ENCODE measurements at regions of chr12 and their contacts with region 1.

Region 1: DNA sequence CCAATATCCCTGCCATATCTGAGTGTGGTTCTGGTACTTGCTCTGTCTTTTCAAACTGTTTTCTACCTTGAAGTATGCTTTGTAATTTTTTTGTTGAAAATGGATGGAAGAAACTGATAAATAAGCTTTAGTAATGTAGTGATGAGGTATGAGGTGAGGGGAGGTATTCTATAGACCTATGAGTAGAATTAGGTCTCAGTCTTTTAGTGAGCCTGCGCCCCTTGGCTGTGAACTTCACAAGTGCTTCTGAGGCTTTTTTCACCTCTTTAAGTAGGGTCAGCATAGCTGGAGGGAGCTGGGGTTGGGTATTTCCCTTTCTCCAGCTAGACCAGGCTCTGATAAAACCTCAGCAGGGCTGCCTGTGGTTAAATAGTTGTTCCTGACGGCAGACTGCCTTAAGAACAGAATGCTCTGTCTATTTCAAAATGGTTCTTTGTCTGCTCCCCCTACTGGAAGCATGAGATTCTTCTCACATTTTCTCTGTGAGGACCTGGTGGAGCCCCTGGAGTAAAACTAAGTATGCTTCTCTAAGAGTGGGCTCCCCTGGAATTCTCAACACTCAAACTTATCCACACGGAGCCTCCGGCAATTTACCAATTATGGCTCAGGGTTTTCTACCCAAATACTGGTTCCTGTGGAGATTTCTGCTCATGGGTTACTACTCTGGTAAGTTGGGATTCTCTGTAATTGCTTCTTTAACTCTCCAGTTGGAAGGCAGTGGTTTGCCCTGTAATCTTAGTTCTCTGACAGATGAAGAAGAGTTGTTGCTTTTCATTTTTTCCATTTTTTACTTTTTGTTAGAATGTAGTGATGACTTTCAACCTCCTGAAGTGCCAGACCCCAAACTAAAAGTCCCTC is 13.1 kb downstream of the KRT5 start:
- DNase-seq: peak; percentile 21
- H3K4me3 Mint-ChIP-seq: no peak overlapping the region
- H3K27ac Mint-ChIP-seq: no peak overlapping the region
- H3K4me1 Mint-ChIP-seq: no peaks in the 10 kb centered on the region
- H3K27me3 Mint-ChIP-seq: peaks cover 35% of the 10 kb centered on the region
- CTCF ChIP-seq: peak; percentile 40

Region 2: GRCh38 chr12:52307836-52308805 is 199.0 kb before region 1 on chr12:
- CTCF ChIA-PET with region 1: no interaction called
- intact Hi-C with region 1: no loop called
- DNase-seq: peak; percentile 75
- H3K4me3 Mint-ChIP-seq: peak overlapping the region; percentile 84
- H3K27ac Mint-ChIP-seq: peak overlapping the region; percentile 42
- H3K4me1 Mint-ChIP-seq: peaks cover 42% of the 10 kb centered on the region
- H3K27me3 Mint-ChIP-seq: peaks cover 13% of the 10 kb centered on the region
- CTCF ChIP-seq: no peak

Region 3: DNA sequence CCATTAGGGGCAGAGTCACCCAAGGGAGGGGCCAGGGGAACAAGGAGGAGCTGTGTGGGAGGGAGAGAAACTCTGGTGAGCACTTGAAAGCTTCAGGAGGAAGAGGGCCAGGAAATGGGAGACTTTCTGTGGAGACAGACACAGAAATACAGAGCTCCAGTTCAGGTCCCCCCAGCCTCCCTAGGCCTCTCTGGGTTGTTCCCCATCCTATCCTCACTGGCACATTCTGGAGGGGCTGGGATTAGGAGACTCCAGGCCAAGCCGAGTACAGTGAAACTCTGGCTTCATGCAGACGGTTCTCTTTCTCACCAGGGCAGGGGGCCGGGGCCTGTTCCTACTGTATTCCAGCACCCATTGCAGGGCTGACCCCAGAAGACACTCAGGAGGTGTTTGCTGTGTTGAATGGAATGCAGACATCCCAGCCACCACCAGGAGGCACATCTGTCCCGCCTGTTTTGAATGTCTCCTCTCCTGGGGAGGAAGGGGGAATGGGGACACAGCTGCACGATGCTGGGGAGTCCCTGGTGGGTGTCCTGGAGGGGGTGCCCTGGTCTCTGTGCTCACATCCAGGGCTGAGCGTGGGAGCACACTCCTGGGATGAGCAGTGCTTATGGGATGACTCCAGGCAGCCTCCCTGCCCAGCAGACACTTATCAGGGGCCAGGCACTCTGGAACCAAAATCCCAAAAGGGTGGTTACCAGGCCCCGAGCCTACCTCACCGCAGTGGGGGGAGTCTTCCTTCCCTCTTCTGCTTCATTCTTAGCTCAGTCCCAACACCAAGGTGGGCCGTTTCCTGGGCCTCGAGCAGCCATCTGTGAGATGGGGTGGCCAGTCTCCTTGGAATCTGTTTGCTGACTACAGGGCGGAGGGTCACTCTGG is 116.1 kb before region 1 on chr12:
- CTCF ChIA-PET with region 1: no interaction called
- intact Hi-C with region 1: loop called (anchors 5 kb)
- DNase-seq: peak; percentile 41
- H3K4me3 Mint-ChIP-seq: no peak overlapping the region
- H3K27ac Mint-ChIP-seq: no peak overlapping the region
- H3K4me1 Mint-ChIP-seq: no peaks in the 10 kb centered on the region
- H3K27me3 Mint-ChIP-seq: no peaks in the 10 kb centered on the region
- CTCF ChIP-seq: peak; percentile 74

Region 4: GRCh38 chr12:52442600-52443061 is 64.5 kb before region 1 on chr12:
- CTCF ChIA-PET with region 1: no interaction called
- intact Hi-C with region 1: loop called (anchors 5 kb)
- DNase-seq: peak; percentile 21
- H3K4me3 Mint-ChIP-seq: no peak overlapping the region
- H3K27ac Mint-ChIP-seq: peak overlapping the region; percentile 14
- H3K4me1 Mint-ChIP-seq: peaks cover 18% of the 10 kb centered on the region
- H3K27me3 Mint-ChIP-seq: no peaks in the 10 kb centered on the region
- CTCF ChIP-seq: no peak

Measured in Calu3 (cell line).